ENCODE measurements at regions of chr9 and their contacts with region 1.

Region 1: GRCh38 chr9:87324613-87325194 is 173.0 kb upstream of the DAPK1 start:
- DNase-seq: peak; percentile 38
- ATAC-seq: no peak
- H3K4me3 ChIP-seq: no peak overlapping the region
- H3K4me3 Mint-ChIP-seq: no peak overlapping the region
- H3K27ac ChIP-seq: no peak overlapping the region
- H3K27ac Mint-ChIP-seq: no peak overlapping the region
- H3K4me1 ChIP-seq: no peaks in the 10 kb centered on the region
- H3K4me1 Mint-ChIP-seq: no peaks in the 10 kb centered on the region
- H3K27me3 ChIP-seq: no peaks in the 10 kb centered on the region
- H3K27me3 Mint-ChIP-seq: no peaks in the 10 kb centered on the region
- CTCF ChIP-seq: peak; percentile 69

Region 2: GRCh38 chr9:86434039-86434726 is 890.5 kb before region 1 on chr9:
- CTCF ChIA-PET with region 1: interaction called, 5 read pairs
- POLR2A ChIA-PET with region 1: no interaction called
- intact Hi-C with region 1: loop called (anchors 2 kb)
- DNase-seq: peak; percentile 21
- ATAC-seq: no peak
- H3K4me3 ChIP-seq: no peak overlapping the region
- H3K4me3 Mint-ChIP-seq: no peak overlapping the region
- H3K27ac ChIP-seq: no peak overlapping the region
- H3K27ac Mint-ChIP-seq: no peak overlapping the region
- H3K4me1 ChIP-seq: no peaks in the 10 kb centered on the region
- H3K4me1 Mint-ChIP-seq: no peaks in the 10 kb centered on the region
- H3K27me3 ChIP-seq: peaks cover 0 to 2% (median 0%) of the 10 kb centered on the region in 4 experiments
- H3K27me3 Mint-ChIP-seq: peaks cover 18% of the 10 kb centered on the region
- CTCF ChIP-seq: peak; percentile 67

Region 3: GRCh38 chr9:86486891-86487837 is 837.5 kb before region 1 on chr9:
- CTCF ChIA-PET with region 1: interaction called, 4 read pairs
- POLR2A ChIA-PET with region 1: no interaction called
- intact Hi-C with region 1: loop called (anchors 5 kb)
- DNase-seq: peak; percentile 8
- ATAC-seq: no peak
- H3K4me3 ChIP-seq: no peak overlapping the region
- H3K4me3 Mint-ChIP-seq: no peak overlapping the region
- H3K27ac ChIP-seq: no peak overlapping the region
- H3K27ac Mint-ChIP-seq: no peak overlapping the region
- H3K4me1 ChIP-seq: no peaks in the 10 kb centered on the region
- H3K4me1 Mint-ChIP-seq: peaks cover 4% of the 10 kb centered on the region
- H3K27me3 ChIP-seq: no peaks in the 10 kb centered on the region
- H3K27me3 Mint-ChIP-seq: no peaks in the 10 kb centered on the region
- CTCF ChIP-seq: peak; percentile 27

Region 4: GRCh38 chr9:87179573-87180340 is 144.9 kb before region 1 on chr9:
- CTCF ChIA-PET with region 1: no interaction called
- POLR2A ChIA-PET with region 1: no interaction called
- intact Hi-C with region 1: no loop called
- DNase-seq: no peak
- ATAC-seq: no peak
- H3K4me3 ChIP-seq: no peak overlapping the region
- H3K4me3 Mint-ChIP-seq: no peak overlapping the region
- H3K27ac ChIP-seq: no peak overlapping the region
- H3K27ac Mint-ChIP-seq: no peak overlapping the region
- H3K4me1 ChIP-seq: no peaks in the 10 kb centered on the region
- H3K4me1 Mint-ChIP-seq: no peaks in the 10 kb centered on the region
- H3K27me3 ChIP-seq: no peaks in the 10 kb centered on the region
- H3K27me3 Mint-ChIP-seq: no peaks in the 10 kb centered on the region
- CTCF ChIP-seq: no peak

Measured in B cell (primary cell).